Left ventricle myocardium inferior (tissue), 1 donor: ENCODE measurements at regions of chr10 and their contacts with region 1.

Region 1: DNA sequence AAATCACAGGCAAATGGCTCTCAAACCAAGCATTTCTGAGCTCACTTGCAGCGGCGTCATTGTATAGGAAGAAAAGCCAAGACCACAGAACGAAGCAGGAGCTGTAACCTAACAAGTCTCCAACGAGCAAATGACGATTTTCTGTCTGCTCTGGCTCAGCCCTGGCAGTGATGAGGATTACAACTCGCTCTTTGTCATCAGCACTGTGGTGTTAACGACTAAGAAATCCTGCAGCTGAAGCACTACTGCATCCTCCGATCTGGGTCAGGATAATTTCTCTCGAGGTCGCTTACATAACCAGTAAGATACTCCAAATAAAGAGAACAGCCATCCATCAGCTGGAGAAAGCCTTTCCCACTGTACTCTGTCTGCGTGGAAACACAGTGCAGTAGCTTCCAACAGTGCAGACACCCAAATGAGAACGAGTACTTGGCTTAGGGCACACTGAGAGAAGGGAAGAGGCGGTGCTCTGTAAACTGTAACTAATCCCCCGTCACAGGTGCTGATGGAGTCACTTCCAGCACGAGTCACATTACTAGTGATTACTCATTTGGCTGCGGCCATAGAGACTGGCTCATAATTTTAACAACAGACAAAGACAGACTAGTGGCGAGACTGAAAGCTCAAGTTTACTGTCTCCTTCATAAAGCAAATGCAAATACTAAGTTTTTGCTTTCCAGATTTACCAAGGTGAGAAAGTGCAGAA is 135.8 kb downstream of the NRBF2 start:
- DNase-seq: peak; percentile 65
- H3K4me3 ChIP-seq: peak overlapping the region; percentile 66
- H3K27ac ChIP-seq: peak overlapping the region; percentile 89
- H3K4me1 ChIP-seq: peaks cover 44% of the 10 kb centered on the region
- H3K27me3 ChIP-seq: no peaks in the 10 kb centered on the region
- CTCF ChIP-seq: peak; percentile 59

Region 2: GRCh38 chr10:63217120-63217605 is 51.8 kb before region 1 on chr10:
- intact Hi-C with region 1: loop called (anchors 10 kb)
- DNase-seq: no peak
- H3K4me3 ChIP-seq: no peak overlapping the region
- H3K27ac ChIP-seq: no peak overlapping the region
- H3K4me1 ChIP-seq: peaks cover 64% of the 10 kb centered on the region
- H3K27me3 ChIP-seq: no peaks in the 10 kb centered on the region
- CTCF ChIP-seq: peak; percentile 77

Region 3: DNA sequence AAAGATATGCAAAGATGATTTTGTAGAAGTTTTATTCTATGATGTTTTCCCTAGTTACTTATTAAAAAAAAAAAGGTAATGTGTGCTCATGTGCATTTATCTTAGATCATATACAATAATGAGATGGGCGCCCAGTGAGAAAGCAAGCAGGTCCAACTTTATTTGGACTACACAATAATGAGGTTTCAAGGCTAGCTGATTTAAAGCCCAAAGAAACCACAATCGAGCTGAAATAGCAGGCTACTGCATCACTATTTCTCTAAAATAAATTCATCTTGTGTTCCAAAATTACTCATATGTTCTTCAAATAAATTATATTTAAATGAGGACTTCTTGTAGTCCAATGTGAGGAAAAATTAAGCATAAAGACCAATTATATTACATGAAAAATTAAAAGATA is 86.7 kb after region 1 on chr10:
- intact Hi-C with region 1: no loop called
- DNase-seq: no peak
- H3K4me3 ChIP-seq: no peak overlapping the region
- H3K27ac ChIP-seq: no peak overlapping the region
- H3K4me1 ChIP-seq: peaks cover 6% of the 10 kb centered on the region
- H3K27me3 ChIP-seq: no peaks in the 10 kb centered on the region
- CTCF ChIP-seq: no peak